Heart right ventricle (tissue), 16 donors: ENCODE measurements at regions of chr6 and their contacts with region 1.

Region 1: DNA sequence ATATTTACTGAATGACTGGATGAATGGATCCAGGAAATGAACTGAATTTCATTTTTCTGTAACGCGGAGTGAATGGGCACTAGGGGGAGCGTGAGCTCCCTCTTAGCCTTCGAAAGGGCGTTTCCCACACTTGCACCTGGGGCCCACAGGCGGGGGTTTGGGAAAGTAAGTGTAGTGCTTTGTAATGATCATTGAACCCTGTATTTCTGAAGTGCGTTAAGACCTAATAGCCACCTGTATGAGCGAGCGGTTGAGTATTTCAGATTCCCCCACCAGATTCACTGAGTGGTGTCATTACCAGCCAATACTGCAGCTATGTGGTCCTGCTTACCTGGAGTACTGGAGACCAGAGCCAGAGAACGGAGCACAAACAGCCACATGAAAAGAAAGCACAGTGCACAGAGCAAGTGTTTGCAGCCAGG is 10.5 kb downstream of the SYTL3 start:
- DNase-seq: no peak
- ATAC-seq: no peak
- H3K4me3 ChIP-seq: no peak overlapping the region
- H3K27ac ChIP-seq: no peak overlapping the region
- H3K4me1 ChIP-seq: peaks cover 0 to 37% (median 1%) of the 10 kb centered on the region in 9 donors
- H3K27me3 ChIP-seq: no peaks in the 10 kb centered on the region
- CTCF ChIP-seq: peak in 8 of 9 donors; percentile 11 to 60 (median 37)

Region 2: GRCh38 chr6:158506577-158506976 is 153.8 kb before region 1 on chr6:
- intact Hi-C with region 1: loop called in 1 of 10 experiments (anchors 10 kb)
- DNase-seq: no peak
- ATAC-seq: no peak
- H3K4me3 ChIP-seq: no peak overlapping the region
- H3K27ac ChIP-seq: no peak overlapping the region
- H3K4me1 ChIP-seq: no peaks in the 10 kb centered on the region
- H3K27me3 ChIP-seq: no peaks in the 10 kb centered on the region
- CTCF ChIP-seq: no peak

Region 3: GRCh38 chr6:158752613-158753012 is 92.3 kb after region 1 on chr6:
- intact Hi-C with region 1: no loop called
- DNase-seq: peak; percentile 43 to 60
- ATAC-seq: peak; percentile 60 to 90 (median 78)
- H3K4me3 ChIP-seq: no peak overlapping the region
- H3K27ac ChIP-seq: peak overlapping the region in 1 of 10 donors; percentile 22
- H3K4me1 ChIP-seq: peaks cover 0 to 19% (median 7%) of the 10 kb centered on the region in 9 donors
- H3K27me3 ChIP-seq: no peaks in the 10 kb centered on the region
- CTCF ChIP-seq: peak in 7 of 9 donors; percentile 19 to 50 (median 40)

Region 4: DNA sequence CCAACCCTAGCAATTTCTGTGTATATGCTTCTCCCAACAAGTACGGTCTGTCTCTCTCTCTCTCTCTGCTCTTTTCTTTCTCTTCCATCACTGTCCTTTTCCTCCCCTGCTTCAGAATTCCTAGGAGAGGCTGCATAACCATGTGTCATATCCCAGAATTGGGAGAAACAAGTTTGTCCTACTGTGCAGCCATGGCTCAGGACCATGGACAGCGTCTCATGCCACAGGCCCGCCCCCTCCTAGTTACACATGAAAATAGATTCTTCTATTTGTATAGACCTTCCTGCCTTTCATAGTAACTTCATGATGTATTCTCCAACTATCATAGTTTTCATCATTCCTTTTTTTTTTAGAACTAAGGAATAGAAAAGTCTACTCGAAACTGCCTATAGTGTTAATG is 606.8 kb after region 1 on chr6:
- intact Hi-C with region 1: no loop called
- DNase-seq: no peak
- ATAC-seq: no peak
- H3K4me3 ChIP-seq: no peak overlapping the region
- H3K27ac ChIP-seq: no peak overlapping the region
- H3K4me1 ChIP-seq: peaks cover 0 to 4% (median 0%) of the 10 kb centered on the region in 9 donors
- H3K27me3 ChIP-seq: peaks cover 0 to 4% (median 0%) of the 10 kb centered on the region in 7 donors
- CTCF ChIP-seq: no peak